ENCODE measurements at regions of chr12 and their contacts with region 1.

Region 1: DNA sequence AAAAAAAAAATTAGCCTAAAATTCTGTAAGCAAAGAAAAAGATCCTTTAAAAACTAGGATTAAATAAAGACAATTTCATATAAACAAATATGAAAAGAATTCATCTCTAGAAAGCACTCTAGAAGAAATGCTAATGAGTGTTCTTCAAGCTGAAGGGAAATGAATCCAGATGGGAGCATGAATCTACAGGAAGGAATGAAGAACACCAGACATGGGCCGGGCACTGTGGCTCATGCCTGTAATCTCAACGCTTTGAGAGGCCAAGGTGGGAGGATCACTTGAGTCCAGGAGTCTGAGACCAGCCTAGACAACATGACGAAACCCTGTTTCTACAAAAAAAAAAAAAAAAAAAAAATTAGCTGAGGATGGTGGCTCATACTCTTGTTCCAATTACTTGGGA is 297.2 kb downstream of the FBXL14 start:
- DNase-seq: no peak
- ATAC-seq: no peak
- H3K4me3 ChIP-seq: no peak overlapping the region
- H3K4me3 Mint-ChIP-seq: no peak overlapping the region
- H3K27ac ChIP-seq: no peak overlapping the region
- H3K27ac Mint-ChIP-seq: no peak overlapping the region
- H3K4me1 ChIP-seq: no peaks in the 10 kb centered on the region
- H3K4me1 Mint-ChIP-seq: peaks cover 0 to 8% (median 0%) of the 10 kb centered on the region in 3 donors
- H3K27me3 ChIP-seq: no peaks in the 10 kb centered on the region
- H3K27me3 Mint-ChIP-seq: no peaks in the 10 kb centered on the region

Region 2: DNA sequence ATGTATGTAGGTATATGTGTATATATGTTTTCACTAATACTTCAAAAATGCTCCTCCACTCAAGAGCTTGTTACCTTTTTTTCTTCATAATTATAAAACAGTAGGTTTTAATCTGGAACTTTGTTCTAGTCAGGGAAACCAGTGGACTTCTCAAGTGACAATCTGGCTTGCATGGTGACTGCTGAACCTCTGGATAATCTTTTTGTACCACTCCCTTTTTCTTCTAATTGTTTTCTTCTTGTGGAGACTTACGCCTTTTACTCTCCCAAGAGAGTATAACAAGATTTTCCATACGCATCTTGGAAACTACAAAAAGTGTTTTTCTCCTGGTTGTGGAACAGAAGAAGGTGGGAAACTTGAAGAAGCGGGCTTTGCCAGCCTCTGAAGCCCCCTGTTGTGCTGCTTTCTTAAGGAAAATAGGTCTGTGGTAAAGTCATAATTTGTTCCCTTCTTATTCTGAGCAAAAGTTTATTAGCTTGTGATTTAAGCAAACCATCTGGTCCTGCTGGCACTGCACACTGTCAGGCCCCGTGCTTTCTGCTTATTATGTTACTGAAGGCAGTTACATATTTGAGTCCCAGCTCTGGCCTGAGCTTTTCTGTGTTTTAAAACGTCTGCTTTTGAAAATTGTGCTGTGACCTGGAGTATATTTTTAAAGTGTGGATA is 14.4 kb before region 1 on chr12:
- CTCF ChIA-PET with region 1: no interaction called
- POLR2A ChIA-PET with region 1: interaction called in 1 of 2 experiments, 16 read pairs
- DNase-seq: no peak
- ATAC-seq: no peak
- H3K4me3 ChIP-seq: no peak overlapping the region
- H3K4me3 Mint-ChIP-seq: no peak overlapping the region
- H3K27ac ChIP-seq: no peak overlapping the region
- H3K27ac Mint-ChIP-seq: no peak overlapping the region
- H3K4me1 ChIP-seq: peaks cover 0 to 4% of the 10 kb centered on the region in 2 experiments
- H3K4me1 Mint-ChIP-seq: peaks cover 5 to 7% (median 6%) of the 10 kb centered on the region in 3 donors
- H3K27me3 ChIP-seq: no peaks in the 10 kb centered on the region
- H3K27me3 Mint-ChIP-seq: no peaks in the 10 kb centered on the region